ENCODE measurements at regions of chr9 and their contacts with region 1.

Region 1: GRCh38 chr9:104468261-104468660 is 35.8 kb upstream of the OR13F1 start:
- DNase-seq: no peak
- ATAC-seq: no peak
- H3K4me3 ChIP-seq: no peak overlapping the region
- H3K27ac ChIP-seq: no peak overlapping the region
- H3K4me1 ChIP-seq: no peaks in the 10 kb centered on the region
- H3K27me3 ChIP-seq: no peaks in the 10 kb centered on the region
- CTCF ChIP-seq: no peak

Region 2: GRCh38 chr9:104448036-104448435 is 20.2 kb before region 1 on chr9:
- intact Hi-C with region 1: loop called in 1 of 10 experiments (anchors 1 kb)
- DNase-seq: no peak
- ATAC-seq: no peak
- H3K4me3 ChIP-seq: no peak overlapping the region
- H3K27ac ChIP-seq: no peak overlapping the region
- H3K4me1 ChIP-seq: no peaks in the 10 kb centered on the region
- H3K27me3 ChIP-seq: no peaks in the 10 kb centered on the region
- CTCF ChIP-seq: no peak